Activated B cell treated with CpG ODN at 0.5 μM for 24 hours (primary cell): ENCODE measurements at regions of chr18 and their contacts with region 1.

Region 1: GRCh38 chr18:24923138-24923537 is 428.8 kb downstream of the ZNF521 start:
- DNase-seq: no peak
- ATAC-seq: peak; percentile 76
- H3K4me3 Mint-ChIP-seq: peak overlapping the region; percentile 66
- H3K27ac Mint-ChIP-seq: peak overlapping the region; percentile 71
- H3K4me1 Mint-ChIP-seq: peaks cover 73% of the 10 kb centered on the region
- H3K27me3 Mint-ChIP-seq: no peaks in the 10 kb centered on the region
- CTCF ChIP-seq: no peak

Region 2: DNA sequence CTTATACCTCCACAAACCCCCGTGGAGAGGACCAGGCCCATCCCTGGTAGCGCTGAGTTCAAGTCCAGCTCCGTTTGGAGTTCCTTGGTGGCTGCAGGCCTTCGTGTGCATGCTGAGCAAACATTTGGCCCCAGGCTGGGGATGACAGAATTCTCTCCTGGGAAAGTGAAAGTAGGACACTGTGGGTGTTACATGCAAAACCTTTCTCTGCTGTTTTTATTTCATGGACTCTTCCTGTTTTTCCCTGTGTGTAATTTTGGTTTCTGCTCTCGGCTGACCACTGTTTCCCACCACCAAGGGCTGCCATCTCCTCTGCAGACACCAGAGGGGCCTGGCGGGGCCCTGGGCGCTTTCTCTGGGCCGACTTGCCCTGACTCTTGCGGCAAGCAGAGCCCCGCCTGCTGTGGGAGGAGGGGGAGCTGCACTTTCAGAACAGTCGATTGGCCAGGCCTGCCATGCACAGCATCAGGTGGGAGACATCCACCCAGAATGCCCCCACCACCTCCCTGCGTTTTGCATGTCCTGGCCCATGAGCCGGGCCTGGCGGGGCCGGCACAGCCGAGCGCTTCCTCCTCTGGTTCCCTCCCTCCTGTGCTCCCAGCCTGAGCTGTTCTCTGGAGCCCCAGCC is 1685.5 kb before region 1 on chr18:
- CTCF ChIA-PET with region 1: no interaction called
- POLR2A ChIA-PET with region 1: no interaction called
- intact Hi-C with region 1: no loop called
- DNase-seq: peak; percentile 42
- ATAC-seq: peak; percentile 73
- H3K4me3 Mint-ChIP-seq: peak overlapping the region; percentile 75
- H3K27ac Mint-ChIP-seq: peak overlapping the region; percentile 70
- H3K4me1 Mint-ChIP-seq: peaks cover 57% of the 10 kb centered on the region
- H3K27me3 Mint-ChIP-seq: no peaks in the 10 kb centered on the region
- CTCF ChIP-seq: no peak

Region 3: DNA sequence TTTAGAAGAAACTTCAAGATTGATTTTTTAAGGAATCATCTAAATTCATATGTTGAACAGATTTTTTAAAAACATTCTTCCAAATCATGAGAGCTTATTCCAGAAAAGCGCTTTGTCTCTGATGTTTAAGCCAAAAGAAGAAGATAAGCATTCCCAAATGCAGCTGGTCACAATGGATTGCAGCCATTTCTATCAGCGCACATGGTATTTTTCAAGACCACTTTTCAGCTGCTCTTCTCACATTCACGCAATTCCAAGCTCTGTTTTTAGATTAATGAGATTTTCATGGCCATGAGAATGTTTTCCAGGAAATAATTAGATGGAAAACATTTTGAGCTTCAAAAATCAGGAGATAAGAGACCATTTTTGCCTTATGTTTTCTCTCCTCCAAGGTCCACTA is 534.2 kb before region 1 on chr18:
- CTCF ChIA-PET with region 1: no interaction called
- POLR2A ChIA-PET with region 1: no interaction called
- intact Hi-C with region 1: no loop called
- DNase-seq: no peak
- ATAC-seq: no peak
- H3K4me3 Mint-ChIP-seq: no peak overlapping the region
- H3K27ac Mint-ChIP-seq: no peak overlapping the region
- H3K4me1 Mint-ChIP-seq: no peaks in the 10 kb centered on the region
- H3K27me3 Mint-ChIP-seq: peaks cover 13% of the 10 kb centered on the region
- CTCF ChIP-seq: no peak

Region 4: DNA sequence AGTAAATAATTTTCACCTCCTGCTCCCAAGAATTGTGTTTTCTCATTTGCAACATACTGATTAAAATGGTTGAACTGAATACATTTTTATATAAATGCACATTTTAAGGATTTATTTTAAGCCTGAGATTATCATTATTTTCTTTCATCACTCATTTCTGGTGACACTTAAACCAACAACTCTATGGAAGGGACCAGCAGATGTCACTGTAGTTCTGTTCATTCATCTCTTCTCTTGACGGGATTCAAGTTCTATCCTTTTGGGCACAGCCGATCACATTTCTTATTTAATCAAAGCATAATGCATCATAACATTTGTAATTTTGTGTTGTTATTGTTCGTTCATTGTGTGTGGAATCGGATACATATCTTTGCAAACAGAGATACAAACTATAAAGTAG is 44.8 kb before region 1 on chr18:
- CTCF ChIA-PET with region 1: no interaction called
- POLR2A ChIA-PET with region 1: no interaction called
- intact Hi-C with region 1: no loop called
- DNase-seq: no peak
- ATAC-seq: no peak
- H3K4me3 Mint-ChIP-seq: no peak overlapping the region
- H3K27ac Mint-ChIP-seq: no peak overlapping the region
- H3K4me1 Mint-ChIP-seq: peaks cover 5% of the 10 kb centered on the region
- H3K27me3 Mint-ChIP-seq: peaks cover 6% of the 10 kb centered on the region
- CTCF ChIP-seq: no peak

Region 5: GRCh38 chr18:24964216-24964615 is 41.1 kb after region 1 on chr18:
- CTCF ChIA-PET with region 1: no interaction called
- POLR2A ChIA-PET with region 1: no interaction called
- intact Hi-C with region 1: loop called (anchors 1 kb)
- DNase-seq: peak; percentile 30
- ATAC-seq: peak; percentile 100
- H3K4me3 Mint-ChIP-seq: no peak overlapping the region
- H3K27ac Mint-ChIP-seq: peak overlapping the region; percentile 69
- H3K4me1 Mint-ChIP-seq: peaks cover 17% of the 10 kb centered on the region
- H3K27me3 Mint-ChIP-seq: no peaks in the 10 kb centered on the region
- CTCF ChIP-seq: no peak